HepG2 (cell line): ENCODE measurements at regions of chr1 and their contacts with region 1.

Region 1: DNA sequence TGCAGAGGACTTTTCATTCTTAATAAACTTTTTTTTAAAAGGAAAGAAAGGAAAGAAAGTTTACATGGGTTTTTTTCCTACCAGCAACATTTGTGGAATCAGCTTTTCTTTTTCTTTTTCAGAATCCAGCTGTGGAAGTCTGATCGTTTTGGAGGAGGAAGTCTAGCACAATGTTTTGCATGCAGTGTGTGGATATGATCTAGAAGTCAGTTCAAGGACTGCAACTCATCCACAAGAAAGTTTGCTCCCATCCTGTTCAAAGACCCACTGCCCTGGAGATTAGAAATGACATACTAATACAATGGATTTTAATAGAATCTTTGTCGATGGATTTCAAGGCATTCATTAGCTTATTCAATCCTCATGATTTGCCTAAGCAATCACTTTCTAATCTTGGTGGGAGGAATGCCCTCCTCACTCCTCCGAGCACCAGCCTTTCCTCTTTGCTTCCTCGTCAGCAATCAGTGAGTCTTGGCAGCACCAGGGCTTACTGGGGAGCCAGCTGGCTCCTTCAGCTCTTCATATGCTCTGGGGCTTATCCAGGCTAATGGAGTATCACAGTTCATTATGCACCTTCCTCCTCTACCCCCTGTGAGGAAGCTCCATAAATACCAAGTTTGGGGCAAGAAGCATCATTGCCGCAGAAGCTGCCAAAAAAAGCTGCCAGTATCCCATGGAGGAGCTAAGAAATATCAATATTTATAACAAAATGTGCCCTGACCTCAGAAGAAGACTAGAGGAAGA is 392.3 kb upstream of the PKN2 start:
- DNase-seq: no peak
- ATAC-seq: no peak
- H3K4me3 ChIP-seq: no peak overlapping the region
- H3K27ac ChIP-seq: no peak overlapping the region
- H3K4me1 ChIP-seq: no peaks in the 10 kb centered on the region
- H3K27me3 ChIP-seq: no peaks in the 10 kb centered on the region
- CTCF ChIP-seq: no peak
- EP300 ChIP-seq: no peak
- POLR2A ChIP-seq: no peak
- RAD21 ChIP-seq: no peak

Region 2: DNA sequence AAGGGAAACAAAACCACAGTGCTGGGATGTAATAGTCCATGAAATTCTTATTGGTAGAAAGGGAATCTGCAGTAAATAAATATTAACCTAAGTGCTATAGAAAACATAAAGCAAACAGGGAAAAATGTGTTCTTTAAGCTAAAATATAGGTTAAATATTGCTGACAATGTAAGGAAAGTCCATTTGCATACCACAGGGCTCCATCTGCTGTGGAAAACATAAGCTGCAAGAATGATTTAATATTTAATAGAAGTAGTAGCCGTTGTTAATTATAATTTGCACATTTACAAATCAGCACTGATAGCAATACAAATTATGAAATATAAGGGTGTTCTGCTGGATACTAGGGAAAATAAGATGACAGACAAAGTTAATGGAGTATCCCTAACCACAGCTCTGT is 52.6 kb before region 1 on chr1:
- CTCF ChIA-PET with region 1: no interaction called
- POLR2A ChIA-PET with region 1: no interaction called
- in situ Hi-C with region 1: no loop called
- intact Hi-C with region 1: loop called (anchors 2 kb)
- DNase-seq: no peak
- ATAC-seq: no peak
- H3K4me3 ChIP-seq: no peak overlapping the region
- H3K27ac ChIP-seq: no peak overlapping the region
- H3K4me1 ChIP-seq: no peaks in the 10 kb centered on the region
- H3K27me3 ChIP-seq: no peaks in the 10 kb centered on the region; a peak in 1 of 5 replicates
- CTCF ChIP-seq: no peak
- EP300 ChIP-seq: no peak
- POLR2A ChIP-seq: no peak
- RAD21 ChIP-seq: no peak

Region 3: DNA sequence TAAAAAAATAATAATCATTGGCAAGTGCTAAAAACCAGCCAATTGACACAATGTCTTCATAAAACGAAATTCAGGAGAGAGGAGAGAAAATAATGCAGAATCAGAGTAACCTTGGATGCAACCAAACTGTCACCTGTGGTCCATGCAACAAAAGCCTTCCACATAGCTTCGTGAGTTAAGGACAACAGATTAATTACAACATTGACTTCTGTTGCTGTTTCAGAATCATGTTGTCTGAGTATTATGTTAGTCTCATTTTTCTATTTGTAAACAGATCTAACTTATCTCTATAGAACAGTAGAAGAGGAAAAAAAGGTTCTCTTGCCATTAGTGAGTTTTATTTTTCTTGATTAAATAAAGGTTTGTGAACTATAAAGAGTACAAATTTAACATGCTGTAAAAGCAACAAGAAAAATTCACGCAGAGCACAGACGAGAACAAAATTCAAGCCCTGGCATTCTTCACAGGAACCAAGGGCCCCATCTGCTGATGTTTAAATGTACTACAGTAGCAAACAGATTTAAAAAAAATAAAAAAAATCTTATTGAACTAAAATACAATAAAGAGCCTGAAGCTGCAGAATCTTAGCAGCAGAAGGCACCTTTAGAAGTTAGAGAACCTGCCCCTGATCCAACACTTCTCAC is 11.2 kb after region 1 on chr1:
- CTCF ChIA-PET with region 1: no interaction called
- POLR2A ChIA-PET with region 1: no interaction called
- in situ Hi-C with region 1: no loop called
- intact Hi-C with region 1: loop called (anchors 1 kb)
- DNase-seq: peak; percentile 8
- ATAC-seq: peak; percentile 57
- H3K4me3 ChIP-seq: no peak overlapping the region
- H3K27ac ChIP-seq: no peak overlapping the region
- H3K4me1 ChIP-seq: no peaks in the 10 kb centered on the region
- H3K27me3 ChIP-seq: no peaks in the 10 kb centered on the region; a peak in 1 of 5 replicates
- CTCF ChIP-seq: peak; percentile 21; the same call in 1 of the 2 replicates
- EP300 ChIP-seq: no peak
- POLR2A ChIP-seq: no peak
- RAD21 ChIP-seq: no peak